ENCODE measurements at regions of chr3 and their contacts with region 1.

Region 1: DNA sequence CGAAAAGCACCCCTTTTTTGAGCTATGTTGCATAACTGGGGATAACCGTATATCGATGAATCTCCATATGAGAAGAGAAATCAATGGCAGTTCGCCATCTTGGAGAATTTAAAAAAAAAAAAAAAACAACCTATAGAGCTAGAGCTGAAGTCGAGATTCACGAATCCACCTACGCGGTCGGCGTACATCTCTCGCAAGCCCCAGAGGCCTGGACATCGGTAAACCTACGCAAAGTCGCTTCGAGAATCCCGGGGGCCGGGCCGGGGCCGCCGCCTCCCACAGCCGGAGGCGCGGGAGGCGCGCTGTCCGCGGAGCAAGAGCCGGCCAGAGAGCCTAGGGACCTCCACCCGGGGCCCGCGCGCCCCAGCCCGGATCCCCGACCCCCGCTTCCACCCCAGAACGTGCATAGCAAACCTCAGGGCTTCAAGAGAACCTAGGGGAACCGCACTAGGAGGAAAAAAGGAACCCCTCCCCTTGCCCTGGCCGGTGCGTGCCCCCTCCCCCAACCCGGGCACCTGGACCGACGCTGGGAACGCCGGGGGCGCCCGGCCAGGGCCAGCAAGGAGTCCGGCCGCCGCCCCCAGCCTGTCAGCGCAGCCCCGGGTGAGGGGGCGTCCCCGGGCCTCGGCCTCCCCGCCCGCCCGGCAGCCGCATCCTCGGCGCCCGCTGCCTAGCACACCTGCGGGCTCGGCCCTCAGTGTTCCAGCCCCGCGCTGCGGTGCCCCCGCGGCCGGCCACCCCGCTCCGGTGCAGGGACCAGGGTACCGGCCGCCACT is 567 bp downstream of the PFN2 start:
- DNase-seq: peak; percentile 87
- ATAC-seq: peak; percentile 71
- H3K4me3 ChIP-seq: peak overlapping the region; percentile 35 to 78 (median 67)
- H3K4me3 Mint-ChIP-seq: peak overlapping the region; percentile 96
- H3K27ac ChIP-seq: no peak overlapping the region
- H3K27ac Mint-ChIP-seq: peak overlapping the region; percentile 83
- H3K4me1 ChIP-seq: peaks cover 14% of the 10 kb centered on the region in 2 donors
- H3K4me1 Mint-ChIP-seq: peaks cover 22% of the 10 kb centered on the region
- H3K27me3 ChIP-seq: peaks cover 0 to 15% (median 14%) of the 10 kb centered on the region in 4 experiments
- H3K27me3 Mint-ChIP-seq: peaks cover 27% of the 10 kb centered on the region
- CTCF ChIP-seq: no peak

Region 2: GRCh38 chr3:149765762-149766334 is 204.3 kb before region 1 on chr3:
- CTCF ChIA-PET with region 1: interaction called, 6 read pairs
- POLR2A ChIA-PET with region 1: no interaction called
- intact Hi-C with region 1: loop called (anchors 5 kb)
- DNase-seq: peak; percentile 58
- ATAC-seq: peak; percentile 45
- H3K4me3 ChIP-seq: no peak overlapping the region
- H3K4me3 Mint-ChIP-seq: no peak overlapping the region
- H3K27ac ChIP-seq: no peak overlapping the region
- H3K27ac Mint-ChIP-seq: no peak overlapping the region
- H3K4me1 ChIP-seq: no peaks in the 10 kb centered on the region
- H3K4me1 Mint-ChIP-seq: no peaks in the 10 kb centered on the region
- H3K27me3 ChIP-seq: peaks cover 0 to 17% (median 13%) of the 10 kb centered on the region in 4 experiments
- H3K27me3 Mint-ChIP-seq: peaks cover 24% of the 10 kb centered on the region
- CTCF ChIP-seq: peak; percentile 73

Region 3: DNA sequence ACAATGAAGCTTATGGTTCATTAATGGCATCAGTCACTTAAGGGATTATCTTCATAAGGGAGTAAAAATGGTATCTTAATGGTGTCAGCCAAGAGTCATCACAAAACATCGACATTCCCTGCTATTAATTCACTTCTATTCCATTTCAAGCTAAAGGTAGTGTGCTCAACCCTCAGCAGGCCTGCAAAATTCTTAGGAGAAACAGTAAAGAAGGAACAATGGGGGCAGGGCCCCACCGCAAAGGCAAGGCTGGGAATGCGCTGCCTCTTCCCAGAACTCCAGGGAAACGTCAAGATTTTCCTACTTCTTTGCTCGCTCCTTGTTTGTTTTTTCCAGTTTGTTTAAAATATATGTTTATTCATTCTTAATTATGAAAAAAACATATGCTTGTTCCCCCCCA is 250.7 kb after region 1 on chr3:
- CTCF ChIA-PET with region 1: interaction called, 36 read pairs
- POLR2A ChIA-PET with region 1: no interaction called
- intact Hi-C with region 1: loop called (anchors 1 kb)
- DNase-seq: no peak
- ATAC-seq: no peak
- H3K4me3 ChIP-seq: no peak overlapping the region
- H3K4me3 Mint-ChIP-seq: no peak overlapping the region
- H3K27ac ChIP-seq: no peak overlapping the region
- H3K27ac Mint-ChIP-seq: no peak overlapping the region
- H3K4me1 ChIP-seq: peaks cover 10 to 13% of the 10 kb centered on the region in 2 donors
- H3K4me1 Mint-ChIP-seq: peaks cover 10% of the 10 kb centered on the region
- H3K27me3 ChIP-seq: peaks cover 0 to 31% (median 13%) of the 10 kb centered on the region in 4 experiments
- H3K27me3 Mint-ChIP-seq: peaks cover 58% of the 10 kb centered on the region
- CTCF ChIP-seq: no peak

Region 4: GRCh38 chr3:150495563-150496168 is 525.5 kb after region 1 on chr3:
- CTCF ChIA-PET with region 1: interaction called, 11 read pairs
- POLR2A ChIA-PET with region 1: no interaction called
- intact Hi-C with region 1: loop called (anchors 1 kb)
- DNase-seq: peak; percentile 68
- ATAC-seq: peak; percentile 45
- H3K4me3 ChIP-seq: no peak overlapping the region
- H3K4me3 Mint-ChIP-seq: no peak overlapping the region
- H3K27ac ChIP-seq: no peak overlapping the region
- H3K27ac Mint-ChIP-seq: no peak overlapping the region
- H3K4me1 ChIP-seq: no peaks in the 10 kb centered on the region
- H3K4me1 Mint-ChIP-seq: no peaks in the 10 kb centered on the region
- H3K27me3 ChIP-seq: no peaks in the 10 kb centered on the region
- H3K27me3 Mint-ChIP-seq: no peaks in the 10 kb centered on the region
- CTCF ChIP-seq: peak; percentile 91

Region 5: GRCh38 chr3:151384741-151385174 is 1414.6 kb after region 1 on chr3 and contains the start of gene P2RY12:
- CTCF ChIA-PET with region 1: no interaction called
- POLR2A ChIA-PET with region 1: no interaction called
- intact Hi-C with region 1: loop called (anchors 10 kb)
- DNase-seq: peak; percentile 62
- ATAC-seq: peak; percentile 24
- H3K4me3 ChIP-seq: peak within 1 kb of the TSS in 4 of 5 experiments; percentile 18 to 53 (median 35)
- H3K4me3 Mint-ChIP-seq: peak within 1 kb of the TSS; percentile 81
- H3K27ac ChIP-seq: peak within 1 kb of the TSS; percentile 59 to 87
- H3K27ac Mint-ChIP-seq: peak within 1 kb of the TSS; percentile 85
- H3K4me1 ChIP-seq: peaks cover 55 to 63% of the 10 kb centered on the region in 2 donors
- H3K4me1 Mint-ChIP-seq: peaks cover 64% of the 10 kb centered on the region
- H3K27me3 ChIP-seq: no peaks in the 10 kb centered on the region
- H3K27me3 Mint-ChIP-seq: no peaks in the 10 kb centered on the region
- CTCF ChIP-seq: no peak
- total RNA-seq, gene P2RY12: 0.73 and 0.79 TPM in 2 replicates